ENCODE measurements at regions of chr6 and their contacts with region 1.

Region 1: DNA sequence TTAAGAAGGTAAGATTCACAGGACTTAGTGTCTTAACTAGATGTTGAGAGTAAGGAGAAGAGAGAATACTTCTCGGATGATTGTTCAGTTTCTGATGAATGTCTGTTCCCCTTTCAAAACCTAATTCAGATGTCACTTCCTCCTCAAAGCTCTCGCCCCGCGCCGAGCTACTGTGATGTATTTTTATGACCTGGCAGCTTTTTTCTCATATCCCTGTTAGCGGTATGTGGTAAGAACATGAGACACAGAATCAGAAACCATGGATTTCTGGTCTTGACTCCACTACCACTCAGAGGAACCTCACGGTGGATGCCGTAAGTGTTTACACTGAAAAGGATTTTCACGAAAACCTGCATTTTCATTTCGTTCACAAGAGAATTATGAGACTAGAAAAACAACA is 48.4 kb downstream of the CEP43 start:
- DNase-seq: peak; percentile 84
- H3K4me3 Mint-ChIP-seq: peak overlapping the region; percentile 41
- H3K27ac Mint-ChIP-seq: peak overlapping the region; percentile 61
- H3K4me1 Mint-ChIP-seq: peaks cover 27% of the 10 kb centered on the region
- H3K27me3 Mint-ChIP-seq: no peaks in the 10 kb centered on the region

Region 2: GRCh38 chr6:166664135-166664534 is 383.4 kb before region 1 on chr6:
- CTCF ChIA-PET with region 1: no interaction called
- intact Hi-C with region 1: no loop called
- DNase-seq: no peak
- H3K4me3 Mint-ChIP-seq: no peak overlapping the region
- H3K27ac Mint-ChIP-seq: no peak overlapping the region
- H3K4me1 Mint-ChIP-seq: peaks cover 2% of the 10 kb centered on the region
- H3K27me3 Mint-ChIP-seq: peaks cover 3% of the 10 kb centered on the region

Region 3: DNA sequence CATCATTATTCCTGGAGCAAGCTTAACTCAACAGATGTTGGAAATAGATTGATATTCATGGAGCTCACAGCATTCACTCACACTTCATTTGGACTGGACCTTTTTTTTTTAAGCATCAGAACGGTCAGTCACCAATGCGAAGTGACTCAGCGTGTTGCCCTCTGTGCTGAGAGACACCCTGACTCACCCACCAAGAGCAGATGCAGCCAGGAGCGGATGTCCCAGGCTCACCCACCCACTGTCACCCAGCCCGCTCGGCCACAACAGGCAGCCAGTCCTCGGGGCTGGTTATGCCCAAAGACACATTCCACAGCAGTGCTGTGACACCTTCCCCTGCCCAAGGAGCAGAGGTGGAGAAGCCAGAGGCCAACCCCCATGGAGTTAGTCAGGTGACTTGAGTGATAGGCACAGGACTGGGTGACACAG is 106.9 kb before region 1 on chr6:
- CTCF ChIA-PET with region 1: no interaction called
- intact Hi-C with region 1: loop called (anchors 1 kb)
- DNase-seq: no peak
- H3K4me3 Mint-ChIP-seq: no peak overlapping the region
- H3K27ac Mint-ChIP-seq: peak overlapping the region; percentile 97
- H3K4me1 Mint-ChIP-seq: peaks cover 61% of the 10 kb centered on the region
- H3K27me3 Mint-ChIP-seq: no peaks in the 10 kb centered on the region

Region 4: GRCh38 chr6:166999145-166999883 is 48.2 kb before region 1 on chr6 and contains the start of gene CEP43:
- CTCF ChIA-PET with region 1: interaction called, 4 read pairs
- intact Hi-C with region 1: loop called (anchors 1 kb)
- DNase-seq: peak; percentile 82
- H3K4me3 Mint-ChIP-seq: peak within 1 kb of the TSS; percentile 86
- H3K27ac Mint-ChIP-seq: peak within 1 kb of the TSS; percentile 74
- H3K4me1 Mint-ChIP-seq: peaks cover 26% of the 10 kb centered on the region
- H3K27me3 Mint-ChIP-seq: no peaks in the 10 kb centered on the region
- total RNA-seq, gene CEP43: 19.6 to 20.3 TPM

Region 5: DNA sequence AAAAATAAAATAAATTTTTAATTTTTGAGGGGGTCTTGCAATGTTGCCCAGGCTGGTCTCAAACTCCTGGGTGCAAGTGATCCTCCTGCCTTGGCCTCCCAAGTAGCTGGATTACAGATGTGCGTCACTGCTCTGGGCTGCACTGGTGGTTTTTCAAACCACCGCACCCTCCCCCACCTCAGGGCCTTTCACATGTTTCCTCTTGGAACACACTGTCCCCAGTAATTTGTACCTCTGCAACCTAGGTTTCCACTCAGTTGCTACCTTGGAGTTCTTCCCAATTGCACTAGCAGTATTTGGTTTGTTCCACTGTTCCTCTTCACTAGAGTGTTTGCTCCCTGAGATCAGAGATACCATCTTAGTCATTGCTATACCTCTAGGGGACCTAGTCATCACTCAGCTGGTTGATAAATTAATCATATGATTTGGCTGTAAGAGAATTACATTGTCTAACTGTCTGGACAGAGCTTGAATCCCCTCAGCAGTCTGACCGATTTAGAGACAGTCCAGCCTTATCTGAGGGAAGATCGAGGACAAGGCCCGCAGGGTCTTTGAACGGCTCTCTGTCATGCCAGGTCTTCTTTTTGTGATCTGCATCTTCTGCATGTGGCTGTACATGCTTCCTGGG is 16.4 kb before region 1 on chr6:
- CTCF ChIA-PET with region 1: no interaction called
- intact Hi-C with region 1: no loop called
- DNase-seq: no peak
- H3K4me3 Mint-ChIP-seq: no peak overlapping the region
- H3K27ac Mint-ChIP-seq: no peak overlapping the region
- H3K4me1 Mint-ChIP-seq: peaks cover 4% of the 10 kb centered on the region
- H3K27me3 Mint-ChIP-seq: no peaks in the 10 kb centered on the region

Region 6: DNA sequence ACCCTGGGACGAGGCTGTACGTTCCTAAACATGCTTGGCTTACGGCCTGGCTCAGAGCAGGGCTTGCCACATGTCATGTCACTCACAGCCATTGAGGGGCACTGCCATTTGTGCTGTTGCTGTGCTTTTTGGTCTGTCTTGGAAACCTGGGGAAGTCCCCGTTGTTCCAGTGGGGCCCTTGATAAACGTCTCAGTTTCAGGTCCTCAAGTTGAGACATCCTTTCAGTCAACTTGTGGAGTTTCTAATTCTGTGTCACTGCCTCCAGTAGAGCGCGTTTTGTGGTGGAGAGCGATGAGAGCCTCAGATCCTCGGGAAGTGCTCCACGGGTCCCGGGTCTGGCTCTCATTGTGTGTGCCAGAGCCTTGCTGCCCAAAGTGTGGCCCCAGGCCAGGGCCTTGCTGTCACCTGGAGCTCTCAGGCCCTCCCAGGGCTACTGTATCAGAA is 32.3 kb after region 1 on chr6:
- CTCF ChIA-PET with region 1: no interaction called
- intact Hi-C with region 1: loop called (anchors 1 kb)
- DNase-seq: peak; percentile 77
- H3K4me3 Mint-ChIP-seq: no peak overlapping the region
- H3K27ac Mint-ChIP-seq: no peak overlapping the region
- H3K4me1 Mint-ChIP-seq: peaks cover 22% of the 10 kb centered on the region
- H3K27me3 Mint-ChIP-seq: peaks cover 7% of the 10 kb centered on the region

Region 7: GRCh38 chr6:167113935-167114910 is 66.7 kb after region 1 on chr6:
- CTCF ChIA-PET with region 1: no interaction called
- intact Hi-C with region 1: loop called (anchors 2 kb)
- DNase-seq: peak; percentile 51
- H3K4me3 Mint-ChIP-seq: no peak overlapping the region
- H3K27ac Mint-ChIP-seq: peak overlapping the region; percentile 46
- H3K4me1 Mint-ChIP-seq: peaks cover 17% of the 10 kb centered on the region
- H3K27me3 Mint-ChIP-seq: peaks cover 2% of the 10 kb centered on the region

Measured in activated naive CD4-positive, alpha-beta T cell treated with anti-CD3 and anti-CD28 coated beads for 36 hours (primary cell).